ENCODE measurements at regions of chr12 and their contacts with region 1.

Region 1: DNA sequence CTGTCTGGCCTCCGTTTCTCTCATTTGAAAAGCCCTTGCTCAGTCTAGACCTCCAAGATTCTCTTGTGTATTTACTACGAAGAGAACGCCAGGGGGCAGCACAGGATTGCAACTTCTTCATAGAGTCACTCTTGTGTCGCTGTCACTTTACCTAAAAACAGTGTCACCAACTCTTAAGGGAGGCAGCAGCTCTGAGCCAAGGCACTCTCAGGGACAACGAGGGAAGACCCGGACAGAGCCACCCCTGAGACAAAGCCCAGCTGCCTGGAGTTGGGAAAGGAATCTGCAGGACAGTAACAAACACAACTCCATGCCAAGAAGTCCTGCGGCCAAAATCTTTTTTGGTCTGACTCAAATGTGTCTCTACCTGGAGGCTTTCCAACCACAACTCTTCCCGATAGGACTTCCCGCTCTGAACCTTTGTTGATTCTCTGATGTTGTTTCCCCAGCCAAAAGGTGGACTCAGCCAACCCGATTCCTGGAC is 9.6 kb upstream of the RPAP3 start:
- DNase-seq: peak; percentile 90
- H3K4me3 ChIP-seq: no peak overlapping the region
- H3K27ac ChIP-seq: peak overlapping the region in 1 of 8 donors; percentile 9
- H3K4me1 ChIP-seq: peaks cover 20 to 59% (median 32%) of the 10 kb centered on the region in 6 donors
- H3K27me3 ChIP-seq: no peaks in the 10 kb centered on the region
- CTCF ChIP-seq: peak in 10 of 11 experiments; percentile 64 to 89 (median 82)
- POLR2A ChIP-seq: no peak

Region 2: GRCh38 chr12:47767216-47767724 is 51.8 kb after region 1 on chr12:
- intact Hi-C with region 1: loop called (anchors 5 kb)
- DNase-seq: peak; percentile 83
- H3K4me3 ChIP-seq: no peak overlapping the region
- H3K27ac ChIP-seq: no peak overlapping the region
- H3K4me1 ChIP-seq: peaks cover 0 to 55% (median 31%) of the 10 kb centered on the region in 6 donors
- H3K27me3 ChIP-seq: no peaks in the 10 kb centered on the region
- CTCF ChIP-seq: peak; percentile 16 to 72 (median 66)
- POLR2A ChIP-seq: no peak

Region 3: DNA sequence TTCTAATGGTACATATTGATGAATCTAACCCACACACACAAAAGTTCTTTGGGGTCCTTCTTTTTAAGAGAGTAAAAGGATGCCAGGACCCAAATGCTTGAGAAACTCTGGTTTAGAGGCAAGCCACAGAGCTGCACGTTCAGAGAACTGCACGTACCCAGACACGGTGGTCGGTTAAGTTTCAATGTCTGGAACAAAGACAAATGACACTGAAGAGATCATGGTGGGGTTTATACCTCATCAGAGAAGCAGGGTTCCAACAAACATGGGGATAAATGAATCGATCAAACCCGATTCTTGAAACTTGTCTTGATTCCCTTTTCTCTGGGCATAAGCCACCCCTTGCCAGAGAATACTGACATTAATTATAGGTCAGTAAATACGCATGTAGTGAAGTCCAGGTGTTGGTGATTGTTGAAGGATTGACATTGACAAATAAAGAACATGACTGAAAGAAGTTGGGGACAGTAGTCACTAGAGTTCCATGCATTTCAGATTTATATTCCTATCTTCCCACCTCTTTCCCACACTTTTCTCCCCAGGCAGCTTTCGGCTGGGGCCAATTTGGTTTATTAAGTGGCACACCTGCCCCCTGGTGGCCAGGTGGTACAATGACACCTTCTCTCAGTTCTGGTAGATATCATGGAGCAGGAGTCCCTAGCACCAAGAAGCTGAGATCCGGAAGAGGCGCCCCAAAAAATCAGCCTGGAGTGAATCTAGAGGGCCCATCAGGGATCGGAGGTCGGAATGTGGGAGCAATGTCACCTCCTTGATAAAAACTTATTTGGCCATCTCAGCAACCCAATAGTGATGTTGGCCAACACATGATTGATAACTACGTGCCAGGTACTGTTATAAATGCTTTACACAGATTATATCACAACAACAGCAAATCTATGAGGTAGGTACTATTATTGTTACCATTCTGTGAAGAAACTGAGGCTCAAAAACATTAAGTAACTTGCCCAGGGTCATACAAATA is 122.0 kb after region 1 on chr12:
- intact Hi-C with region 1: loop called (anchors 5 kb)
- DNase-seq: peak; percentile 87
- H3K4me3 ChIP-seq: no peak overlapping the region
- H3K27ac ChIP-seq: peak overlapping the region in 4 of 8 donors; percentile 0 to 71 (median 24)
- H3K4me1 ChIP-seq: peaks cover 16 to 64% (median 51%) of the 10 kb centered on the region in 6 donors
- H3K27me3 ChIP-seq: no peaks in the 10 kb centered on the region
- CTCF ChIP-seq: peak; percentile 87 to 96 (median 93)
- POLR2A ChIP-seq: no peak

Region 4: GRCh38 chr12:48069241-48069640 is 353.8 kb after region 1 on chr12:
- intact Hi-C with region 1: no loop called
- DNase-seq: no peak
- H3K4me3 ChIP-seq: no peak overlapping the region
- H3K27ac ChIP-seq: no peak overlapping the region
- H3K4me1 ChIP-seq: no peaks in the 10 kb centered on the region
- H3K27me3 ChIP-seq: no peaks in the 10 kb centered on the region
- CTCF ChIP-seq: no peak
- POLR2A ChIP-seq: no peak

Region 5: GRCh38 chr12:48165094-48165981 is 449.9 kb after region 1 on chr12:
- intact Hi-C with region 1: loop called (anchors 10 kb)
- DNase-seq: no peak
- H3K4me3 ChIP-seq: no peak overlapping the region
- H3K27ac ChIP-seq: no peak overlapping the region
- H3K4me1 ChIP-seq: peaks cover 0 to 11% (median 2%) of the 10 kb centered on the region in 6 donors
- H3K27me3 ChIP-seq: peaks cover 0 to 13% (median 0%) of the 10 kb centered on the region in 7 donors
- CTCF ChIP-seq: peak; percentile 74 to 94 (median 91)
- POLR2A ChIP-seq: no peak

Measured in spleen (tissue), 13 donors.